ENCODE measurements at regions of chr1 and their contacts with region 1.

Region 1: DNA sequence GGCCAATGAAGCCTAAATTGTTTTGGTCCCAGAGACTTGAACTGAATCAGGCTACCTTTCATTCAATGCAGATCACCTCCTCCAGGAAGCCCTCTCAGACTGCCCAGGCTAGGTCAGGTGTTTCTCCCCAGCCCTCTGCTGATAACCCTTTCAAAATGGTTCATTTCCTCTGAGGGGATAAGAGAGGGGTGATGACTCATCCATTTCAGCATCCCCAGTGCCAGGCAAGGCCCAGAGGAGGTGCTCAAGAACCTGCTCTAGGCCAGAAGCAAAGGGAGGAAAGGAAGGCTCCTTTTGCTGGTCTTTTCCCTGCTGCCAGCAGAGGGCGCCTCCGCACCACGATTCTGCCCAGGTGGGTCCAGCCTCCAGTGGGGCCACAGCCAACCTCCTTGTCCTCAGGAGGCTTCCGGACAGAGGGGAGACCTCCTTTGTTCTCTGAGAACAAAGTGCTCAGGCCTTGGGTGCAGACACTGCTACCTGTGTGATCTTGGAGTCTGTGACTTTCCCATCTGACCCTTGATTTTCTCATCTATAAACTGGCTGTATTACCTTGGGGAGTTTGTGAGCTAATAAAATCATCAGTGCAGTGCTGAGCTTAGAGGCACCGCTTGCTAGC is 45.3 kb upstream of the ARHGEF10L start:
- DNase-seq: no peak
- H3K4me3 ChIP-seq: no peak overlapping the region
- H3K27ac ChIP-seq: no peak overlapping the region
- H3K4me1 ChIP-seq: no peaks in the 10 kb centered on the region
- H3K27me3 ChIP-seq: no peaks in the 10 kb centered on the region
- CTCF ChIP-seq: peak; percentile 81 to 93 (median 83)
- EP300 ChIP-seq: no peak
- POLR2A ChIP-seq: no peak

Region 2: DNA sequence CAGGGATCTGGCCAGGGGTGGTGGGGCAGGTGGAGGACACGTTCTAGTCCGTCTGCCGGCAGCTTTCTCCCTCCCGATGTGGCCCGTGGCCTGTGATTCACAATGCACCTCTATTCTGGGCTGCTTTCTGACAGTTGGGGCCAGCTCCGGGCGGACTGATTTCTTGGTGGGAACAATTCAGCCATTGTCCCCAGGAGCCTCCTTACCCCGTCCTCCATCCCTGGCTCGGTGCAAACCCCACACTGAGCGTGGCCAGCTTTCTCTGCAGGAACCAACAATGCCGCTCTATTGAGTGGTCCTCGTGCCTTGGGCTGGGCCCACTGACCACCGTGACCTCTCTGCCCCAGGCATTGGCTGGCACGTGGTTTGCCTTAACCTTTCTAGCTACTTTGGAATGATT is 404.7 kb before region 1 on chr1:
- intact Hi-C with region 1: no loop called
- DNase-seq: no peak
- H3K4me3 ChIP-seq: no peak overlapping the region
- H3K27ac ChIP-seq: no peak overlapping the region
- H3K4me1 ChIP-seq: peaks cover 0 to 9% (median 4%) of the 10 kb centered on the region in 4 donors
- H3K27me3 ChIP-seq: no peaks in the 10 kb centered on the region
- CTCF ChIP-seq: no peak
- EP300 ChIP-seq: no peak
- POLR2A ChIP-seq: no peak

Region 3: DNA sequence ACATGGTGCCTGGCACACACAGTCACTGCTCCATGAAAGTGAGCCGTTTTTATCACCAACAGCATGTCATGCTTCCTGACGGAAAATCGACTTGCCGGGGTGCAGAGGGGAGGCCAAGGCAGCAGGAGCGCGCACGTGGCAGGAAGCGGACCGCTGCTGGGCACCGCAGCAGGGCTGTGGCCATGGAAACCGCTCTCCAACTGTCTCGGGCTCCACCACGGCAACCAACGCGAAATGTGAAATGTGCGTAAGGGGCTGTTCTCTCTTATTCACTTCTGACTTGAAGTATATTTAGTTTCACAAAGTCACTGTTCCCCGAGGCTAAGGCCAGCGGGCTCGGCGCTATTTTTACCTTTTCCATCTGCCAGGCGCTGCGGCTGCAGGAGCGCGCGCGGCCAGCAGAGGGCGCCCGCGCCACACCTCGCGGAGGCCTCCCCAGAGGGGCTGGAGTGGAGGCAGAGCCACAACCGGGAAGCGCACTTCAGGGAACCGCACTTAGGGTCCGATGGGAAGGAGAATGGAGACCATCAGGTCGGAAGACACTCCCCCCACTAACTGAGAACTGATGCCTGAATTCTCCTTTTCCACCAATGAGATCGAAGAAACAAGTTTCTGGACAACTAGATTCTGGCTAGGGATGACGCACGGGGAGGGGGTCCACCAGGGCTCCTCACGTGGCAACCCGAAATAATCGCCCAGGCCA is 74.4 kb before region 1 on chr1:
- intact Hi-C with region 1: loop called (anchors 5 kb)
- DNase-seq: no peak
- H3K4me3 ChIP-seq: no peak overlapping the region
- H3K27ac ChIP-seq: peak overlapping the region in 1 of 4 donors; percentile 47
- H3K4me1 ChIP-seq: peaks cover 4 to 28% (median 24%) of the 10 kb centered on the region in 4 donors
- H3K27me3 ChIP-seq: no peaks in the 10 kb centered on the region
- CTCF ChIP-seq: peak; percentile 99 to 100 (median 99)
- EP300 ChIP-seq: no peak
- POLR2A ChIP-seq: no peak

Region 4: DNA sequence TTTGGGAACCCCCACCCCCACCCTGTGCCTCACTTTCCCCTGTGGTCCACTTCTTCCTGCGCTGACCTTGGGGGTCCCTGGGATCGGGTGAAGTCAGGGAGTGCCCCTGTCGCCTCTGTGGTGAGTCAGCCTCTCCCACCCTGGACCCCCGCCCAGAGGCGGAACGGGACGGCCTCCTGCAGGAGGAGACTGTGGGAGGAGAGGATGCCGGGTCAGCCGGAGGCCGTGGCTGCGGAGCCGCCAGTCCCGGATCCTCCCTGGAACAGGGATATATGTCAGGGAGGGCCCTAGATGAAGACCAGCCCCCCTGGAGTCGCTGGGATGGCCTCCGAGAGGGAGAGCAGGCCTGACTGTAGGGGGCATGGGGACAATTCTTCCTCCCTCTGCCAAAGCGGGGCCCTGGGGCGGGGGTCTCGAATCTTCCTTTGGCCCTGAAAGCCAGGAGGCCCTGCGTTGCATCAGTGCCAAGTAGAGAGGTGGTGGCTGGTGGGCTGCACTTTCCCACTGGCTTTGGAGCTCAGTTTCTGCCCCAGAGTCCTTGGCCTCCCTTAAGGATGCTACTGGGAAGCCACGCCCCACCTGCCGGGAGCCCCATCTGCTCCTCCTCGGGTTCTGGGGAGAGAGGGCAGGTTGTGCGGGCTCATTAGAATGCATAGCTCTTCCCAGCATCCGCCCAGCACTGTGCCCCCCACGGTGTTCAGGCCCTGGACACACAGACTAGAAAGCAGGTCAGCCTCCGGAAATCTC is 46.2 kb after region 1 on chr1:
- intact Hi-C with region 1: no loop called
- DNase-seq: no peak
- H3K4me3 ChIP-seq: peak overlapping the region; percentile 79 to 95 (median 88)
- H3K27ac ChIP-seq: peak overlapping the region; percentile 97 to 98 (median 97)
- H3K4me1 ChIP-seq: peaks cover 23 to 89% (median 82%) of the 10 kb centered on the region in 4 donors
- H3K27me3 ChIP-seq: peaks cover 0 to 3% (median 0%) of the 10 kb centered on the region in 4 donors
- CTCF ChIP-seq: no peak
- EP300 ChIP-seq: no peak
- POLR2A ChIP-seq: no peak

Region 5: DNA sequence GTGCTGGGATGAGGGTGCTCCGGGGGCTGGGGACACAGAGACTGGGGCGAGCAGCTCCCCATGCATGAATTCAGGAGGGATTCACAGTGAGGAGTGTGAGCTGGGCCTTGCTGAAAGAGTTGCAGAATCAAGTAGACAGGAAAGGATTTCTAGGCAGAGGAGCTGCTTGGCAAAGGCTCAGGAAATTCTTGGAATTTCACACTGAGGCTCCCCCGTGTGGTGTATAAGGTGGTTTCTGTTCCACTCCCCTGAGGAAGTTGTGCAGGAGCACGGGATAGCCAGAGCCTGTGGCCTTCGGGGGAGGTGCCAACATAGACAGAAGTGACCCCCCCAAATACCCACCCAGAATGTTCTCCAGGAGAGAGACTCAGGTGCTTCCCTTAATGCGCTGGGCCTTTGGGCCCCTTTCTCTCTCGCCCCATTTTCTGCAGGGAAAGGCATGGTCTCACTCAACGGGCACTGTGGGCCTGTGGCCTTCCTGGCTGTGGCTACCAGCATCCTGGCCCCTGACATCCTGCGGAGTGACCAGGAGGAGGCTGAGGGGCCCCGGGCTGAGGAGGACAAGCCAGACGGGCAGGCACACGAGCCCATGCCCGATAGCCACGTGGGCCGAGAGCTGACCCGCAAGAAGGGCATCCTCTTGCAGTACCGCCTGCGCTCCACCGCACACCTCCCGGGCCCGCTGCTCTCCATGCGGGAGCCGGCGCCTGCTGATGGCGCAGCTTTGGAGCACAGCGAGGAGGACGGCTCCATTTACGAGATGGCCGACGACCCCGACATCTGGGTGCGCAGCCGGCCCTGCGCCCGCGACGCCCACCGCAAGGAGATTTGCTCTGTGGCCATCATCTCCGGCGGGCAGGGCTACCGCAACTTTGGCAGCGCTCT is 202.4 kb after region 1 on chr1:
- intact Hi-C with region 1: loop called (anchors 10 kb)
- DNase-seq: no peak
- H3K4me3 ChIP-seq: no peak overlapping the region
- H3K27ac ChIP-seq: no peak overlapping the region
- H3K4me1 ChIP-seq: peaks cover 6 to 16% (median 11%) of the 10 kb centered on the region in 4 donors
- H3K27me3 ChIP-seq: no peaks in the 10 kb centered on the region
- CTCF ChIP-seq: peak; percentile 26 to 43 (median 28)
- EP300 ChIP-seq: no peak
- POLR2A ChIP-seq: no peak

Region 6: GRCh38 chr1:17719874-17720273 is 225.7 kb after region 1 on chr1:
- intact Hi-C with region 1: no loop called
- DNase-seq: no peak
- H3K4me3 ChIP-seq: no peak overlapping the region
- H3K27ac ChIP-seq: no peak overlapping the region
- H3K4me1 ChIP-seq: no peaks in the 10 kb centered on the region
- H3K27me3 ChIP-seq: peaks cover 0 to 51% (median 0%) of the 10 kb centered on the region in 4 donors
- CTCF ChIP-seq: no peak
- EP300 ChIP-seq: no peak
- POLR2A ChIP-seq: no peak

Region 7: DNA sequence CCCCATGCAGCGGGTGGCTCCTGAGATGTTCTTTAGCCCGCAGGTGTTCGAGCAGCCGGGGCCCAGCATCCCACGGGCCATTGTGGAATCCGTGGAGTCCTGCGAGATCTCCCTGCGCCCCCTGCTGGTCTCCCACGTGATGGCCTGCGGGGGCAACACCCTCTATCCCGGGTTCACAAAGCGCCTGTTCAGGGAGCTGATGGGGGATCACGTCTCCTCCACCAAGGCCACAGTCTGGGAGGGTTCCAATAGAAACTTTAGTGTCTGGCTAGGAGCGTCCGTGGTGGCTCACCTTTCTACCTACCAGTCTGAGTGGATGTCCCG is 331.9 kb after region 1 on chr1:
- intact Hi-C with region 1: loop called (anchors 10 kb)
- DNase-seq: no peak
- H3K4me3 ChIP-seq: no peak overlapping the region
- H3K27ac ChIP-seq: no peak overlapping the region
- H3K4me1 ChIP-seq: no peaks in the 10 kb centered on the region
- H3K27me3 ChIP-seq: peaks cover 0 to 85% (median 7%) of the 10 kb centered on the region in 4 donors
- CTCF ChIP-seq: peak; percentile 35 to 55 (median 46)
- EP300 ChIP-seq: no peak
- POLR2A ChIP-seq: no peak

Region 8: DNA sequence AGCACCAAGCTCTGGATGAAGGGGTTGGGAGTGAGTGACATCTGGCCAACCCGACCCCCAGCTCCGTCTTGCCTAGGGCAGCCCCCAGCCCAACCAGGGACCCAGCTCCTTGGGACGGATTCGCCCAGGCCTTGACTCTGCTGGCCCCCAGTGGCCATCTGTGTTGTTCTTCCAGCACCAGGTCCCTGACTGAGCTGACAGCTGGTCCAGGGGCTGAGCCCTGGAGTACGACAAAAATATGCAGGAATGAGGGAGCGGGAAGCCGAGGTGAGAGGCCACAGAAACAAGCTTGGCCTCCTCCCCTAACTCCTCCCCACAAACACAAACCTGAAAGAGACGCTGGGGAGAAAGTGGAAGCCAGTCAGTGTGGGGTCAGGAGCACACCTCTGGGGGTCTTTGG is 1081.4 kb after region 1 on chr1:
- intact Hi-C with region 1: loop called (anchors 5 kb)
- DNase-seq: no peak
- H3K4me3 ChIP-seq: no peak overlapping the region
- H3K27ac ChIP-seq: no peak overlapping the region
- H3K4me1 ChIP-seq: no peaks in the 10 kb centered on the region
- H3K27me3 ChIP-seq: peaks cover 0 to 57% (median 0%) of the 10 kb centered on the region in 4 donors
- CTCF ChIP-seq: peak; percentile 40 to 62 (median 42)
- EP300 ChIP-seq: no peak
- POLR2A ChIP-seq: no peak